Breast epithelium (tissue), 4 donors: ENCODE measurements at regions of chr5 and their contacts with region 1.

Region 1: GRCh38 chr5:20145240-20145639 is 157.2 kb upstream of the CDH18 start:
- DNase-seq: no peak
- H3K4me3 ChIP-seq: no peak overlapping the region
- H3K27ac ChIP-seq: no peak overlapping the region
- H3K4me1 ChIP-seq: no peaks in the 10 kb centered on the region
- H3K27me3 ChIP-seq: no peaks in the 10 kb centered on the region
- CTCF ChIP-seq: no peak
- POLR2A ChIP-seq: no peak

Region 2: GRCh38 chr5:20077186-20077585 is 68.1 kb before region 1 on chr5:
- intact Hi-C with region 1: loop called (anchors 5 kb)
- DNase-seq: no peak
- H3K4me3 ChIP-seq: no peak overlapping the region
- H3K27ac ChIP-seq: no peak overlapping the region
- H3K4me1 ChIP-seq: no peaks in the 10 kb centered on the region
- H3K27me3 ChIP-seq: no peaks in the 10 kb centered on the region
- CTCF ChIP-seq: no peak
- POLR2A ChIP-seq: no peak